Right lobe of liver (tissue), 6 donors: ENCODE measurements at regions of chr21 and their contacts with region 1.

Region 1: GRCh38 chr21:26850108-26850643 is 5.0 kb upstream of the ADAMTS1 start:
- DNase-seq: no peak
- ATAC-seq: no peak
- H3K4me3 ChIP-seq: no peak overlapping the region
- H3K27ac ChIP-seq: no peak overlapping the region
- H3K4me1 ChIP-seq: peaks cover 0 to 23% (median 3%) of the 10 kb centered on the region in 4 donors
- H3K27me3 ChIP-seq: no peaks in the 10 kb centered on the region
- CTCF ChIP-seq: peak; percentile 64 to 79 (median 69)
- POLR2A ChIP-seq: no peak

Region 2: GRCh38 chr21:26732432-26733221 is 117.5 kb before region 1 on chr21:
- intact Hi-C with region 1: no loop called
- DNase-seq: peak in 1 of 3 donors; percentile 34
- ATAC-seq: peak; percentile 73 to 85 (median 77)
- H3K4me3 ChIP-seq: no peak overlapping the region
- H3K27ac ChIP-seq: no peak overlapping the region
- H3K4me1 ChIP-seq: no peaks in the 10 kb centered on the region
- H3K27me3 ChIP-seq: no peaks in the 10 kb centered on the region
- CTCF ChIP-seq: peak; percentile 52 to 64 (median 56)
- POLR2A ChIP-seq: no peak

Region 3: GRCh38 chr21:26900980-26901379 is 50.8 kb after region 1 on chr21:
- intact Hi-C with region 1: no loop called
- DNase-seq: no peak
- ATAC-seq: no peak
- H3K4me3 ChIP-seq: no peak overlapping the region
- H3K27ac ChIP-seq: no peak overlapping the region
- H3K4me1 ChIP-seq: no peaks in the 10 kb centered on the region
- H3K27me3 ChIP-seq: no peaks in the 10 kb centered on the region
- CTCF ChIP-seq: no peak
- POLR2A ChIP-seq: no peak

Region 4: GRCh38 chr21:27555996-27556395 is 705.8 kb after region 1 on chr21:
- intact Hi-C with region 1: loop called in 1 of 2 experiments (anchors 10 kb)
- DNase-seq: no peak
- ATAC-seq: no peak
- H3K4me3 ChIP-seq: no peak overlapping the region
- H3K27ac ChIP-seq: no peak overlapping the region
- H3K4me1 ChIP-seq: no peaks in the 10 kb centered on the region
- H3K27me3 ChIP-seq: no peaks in the 10 kb centered on the region
- CTCF ChIP-seq: no peak
- POLR2A ChIP-seq: no peak

Region 5: GRCh38 chr21:27700974-27701614 is 850.9 kb after region 1 on chr21:
- intact Hi-C with region 1: loop called in 1 of 2 experiments (anchors 10 kb)
- DNase-seq: peak; percentile 74 to 81 (median 78)
- ATAC-seq: peak; percentile 97 to 98 (median 97)
- H3K4me3 ChIP-seq: no peak overlapping the region
- H3K27ac ChIP-seq: no peak overlapping the region
- H3K4me1 ChIP-seq: peaks cover 0 to 4% (median 0%) of the 10 kb centered on the region in 4 donors
- H3K27me3 ChIP-seq: no peaks in the 10 kb centered on the region
- CTCF ChIP-seq: peak; percentile 78 to 87 (median 85)
- POLR2A ChIP-seq: no peak